Left ventricle myocardium superior (tissue), 1 donor: ENCODE measurements at regions of chr4 and their contacts with region 1.

Region 1: DNA sequence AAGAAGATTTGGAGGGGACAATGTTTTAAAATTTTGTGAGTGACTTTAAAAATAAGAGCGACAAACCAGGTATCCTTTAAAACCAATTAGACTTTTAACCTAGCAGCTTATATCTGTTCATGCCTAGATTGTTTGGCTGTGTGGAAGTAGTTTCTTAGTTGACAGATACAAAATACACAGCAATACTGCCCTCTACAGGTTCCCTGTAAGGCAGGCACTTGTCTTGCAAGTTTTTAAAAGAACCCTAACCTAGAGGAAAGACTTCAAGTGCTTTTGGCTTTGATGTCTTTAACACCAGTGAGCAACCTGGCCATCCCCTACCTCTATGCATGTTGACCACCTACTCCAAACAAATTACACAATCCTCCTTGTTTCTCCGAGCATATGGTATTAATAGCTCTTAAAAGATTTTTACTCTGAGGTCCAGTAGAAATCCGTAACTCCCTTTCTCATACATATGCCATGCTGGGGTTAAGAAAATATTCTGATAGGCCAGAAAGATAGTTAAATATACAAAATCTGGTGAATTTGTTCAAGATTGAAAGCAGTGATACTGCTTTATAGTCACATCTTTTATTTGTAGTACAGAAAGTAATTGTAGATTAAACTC is 273.0 kb downstream of the ARHGAP24 start:
- DNase-seq: no peak
- ATAC-seq: peak; percentile 84

Region 2: DNA sequence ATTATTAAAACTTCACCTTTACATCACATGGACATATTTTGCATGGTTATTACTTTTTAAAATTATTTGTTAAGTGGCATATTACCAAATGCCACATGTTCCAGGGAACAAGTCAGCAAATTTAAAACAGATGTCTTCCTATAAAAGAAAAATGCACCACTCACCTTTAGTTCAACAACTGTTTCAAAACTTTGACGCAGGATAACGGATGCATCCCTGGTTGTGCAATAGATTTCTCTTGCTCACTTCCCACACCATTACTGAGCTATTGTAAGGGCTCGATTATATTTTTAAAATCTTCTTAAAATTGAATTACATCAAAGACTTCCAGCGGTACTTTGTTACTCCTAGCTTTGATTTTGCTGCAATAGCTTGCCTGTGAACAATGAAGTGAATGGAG is 366.0 kb before region 1 on chr4:
- intact Hi-C with region 1: no loop called
- DNase-seq: no peak
- ATAC-seq: no peak

Region 3: GRCh38 chr4:85474818-85475630 is 273.0 kb before region 1 on chr4 and contains the start of gene ARHGAP24:
- intact Hi-C with region 1: loop called (anchors 10 kb)
- DNase-seq: peak; percentile 92
- ATAC-seq: peak; percentile 98
- total RNA-seq, gene ARHGAP24: 13.3 TPM

Region 4: GRCh38 chr4:85591406-85592098 is 156.4 kb before region 1 on chr4:
- intact Hi-C with region 1: loop called (anchors 10 kb)
- DNase-seq: no peak
- ATAC-seq: no peak